ENCODE measurements at regions of chr15 and their contacts with region 1.

Region 1: DNA sequence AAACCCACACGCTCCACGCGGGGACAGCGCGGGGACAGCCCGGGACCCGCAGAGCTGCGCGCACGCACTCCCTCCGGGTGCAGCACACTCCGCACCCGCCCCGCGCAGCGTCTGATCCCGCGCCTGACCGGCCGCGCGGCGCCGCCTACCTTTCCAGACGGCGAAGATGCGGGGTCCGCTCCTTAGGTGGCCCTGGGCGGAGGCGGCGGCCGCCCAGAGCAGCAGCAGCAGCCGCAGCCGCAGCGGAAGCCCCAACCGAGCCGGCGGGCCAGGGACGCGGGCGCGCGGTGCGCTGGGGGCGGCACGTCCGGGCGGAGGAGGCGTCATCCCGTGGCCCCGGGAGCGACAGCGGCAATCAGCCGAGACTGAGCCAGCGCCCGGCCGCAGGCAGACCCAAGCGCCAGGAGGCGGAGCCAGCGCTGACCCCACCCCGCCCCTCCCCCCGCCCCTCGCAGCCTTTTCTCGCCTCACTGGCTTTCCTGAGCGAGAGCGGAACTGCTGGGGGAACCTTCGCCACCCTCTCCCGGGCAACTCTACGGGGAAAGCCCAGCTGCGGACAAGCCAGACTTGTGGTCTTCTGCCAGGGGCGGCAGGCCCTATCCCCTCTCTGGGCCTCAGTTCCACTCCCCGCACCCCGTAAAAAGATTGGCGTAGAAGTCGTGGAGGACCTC is at the start of gene SEMA7A:
- DNase-seq: peak; percentile 83
- ATAC-seq: peak; percentile 72
- H3K4me3 ChIP-seq: peak within 1 kb of the TSS; percentile 94
- H3K27ac ChIP-seq: peak within 1 kb of the TSS; percentile 53
- H3K4me1 ChIP-seq: peaks cover 44% of the 10 kb centered on the region
- H3K27me3 ChIP-seq: no peaks in the 10 kb centered on the region
- CTCF ChIP-seq: no peak
- total RNA-seq, gene SEMA7A: 74.9 and 75.9 TPM in 2 replicates

Region 2: DNA sequence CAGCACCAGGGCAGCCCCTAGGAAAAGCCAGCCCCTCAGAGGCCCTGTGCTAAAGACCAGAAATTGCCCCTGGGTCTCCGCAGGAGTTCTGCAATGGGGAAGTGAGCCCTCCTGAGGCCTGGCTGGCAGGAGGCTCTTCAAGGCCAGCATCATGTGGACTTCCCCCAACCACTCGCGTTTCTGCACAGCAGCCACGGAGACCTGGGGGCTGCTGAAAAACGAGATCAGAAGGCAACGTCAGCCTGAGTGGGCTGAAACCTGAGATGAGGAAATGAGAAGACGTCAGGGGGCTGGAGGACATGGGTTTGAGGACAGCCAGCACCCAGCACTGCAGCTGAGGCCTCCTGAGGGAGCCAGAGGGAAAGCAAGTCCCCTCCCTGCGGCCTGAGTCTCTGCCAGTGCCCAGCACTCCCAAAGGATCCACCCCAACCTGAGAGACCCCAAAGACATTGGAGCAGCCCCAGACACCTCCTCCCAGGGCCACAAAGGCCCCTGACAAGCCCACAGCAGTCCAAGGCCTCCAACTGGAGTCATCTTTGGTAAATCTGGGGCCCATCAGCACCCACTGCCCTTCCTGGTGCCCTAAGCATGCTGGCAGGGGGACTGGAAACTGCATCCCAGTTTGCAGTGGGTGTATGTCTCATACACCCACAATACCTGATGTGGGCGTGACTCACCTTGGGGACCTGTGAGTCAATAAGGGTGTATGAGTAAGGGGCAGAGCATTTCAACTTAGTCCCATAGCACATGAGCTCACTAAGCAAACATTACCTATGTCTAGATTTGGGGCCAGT is 37.1 kb before region 1 on chr15:
- CTCF ChIA-PET with region 1: no interaction called
- POLR2A ChIA-PET with region 1: no interaction called
- intact Hi-C with region 1: loop called (anchors 5 kb)
- DNase-seq: peak; percentile 98
- ATAC-seq: peak; percentile 78
- H3K4me3 ChIP-seq: no peak overlapping the region
- H3K27ac ChIP-seq: peak overlapping the region; percentile 100
- H3K4me1 ChIP-seq: peaks cover 67% of the 10 kb centered on the region
- H3K27me3 ChIP-seq: no peaks in the 10 kb centered on the region
- CTCF ChIP-seq: 0 out of 2 replicates have a peak, but pooled peaks have one; percentile 22

Region 3: GRCh38 chr15:74420197-74420898 is 13.4 kb before region 1 on chr15:
- CTCF ChIA-PET with region 1: no interaction called
- POLR2A ChIA-PET with region 1: no interaction called
- intact Hi-C with region 1: loop called (anchors 1 kb)
- DNase-seq: peak; percentile 67
- ATAC-seq: peak; percentile 41
- H3K4me3 ChIP-seq: no peak overlapping the region
- H3K27ac ChIP-seq: peak overlapping the region; percentile 29
- H3K4me1 ChIP-seq: peaks cover 91% of the 10 kb centered on the region
- H3K27me3 ChIP-seq: no peaks in the 10 kb centered on the region
- CTCF ChIP-seq: no peak

Region 4: DNA sequence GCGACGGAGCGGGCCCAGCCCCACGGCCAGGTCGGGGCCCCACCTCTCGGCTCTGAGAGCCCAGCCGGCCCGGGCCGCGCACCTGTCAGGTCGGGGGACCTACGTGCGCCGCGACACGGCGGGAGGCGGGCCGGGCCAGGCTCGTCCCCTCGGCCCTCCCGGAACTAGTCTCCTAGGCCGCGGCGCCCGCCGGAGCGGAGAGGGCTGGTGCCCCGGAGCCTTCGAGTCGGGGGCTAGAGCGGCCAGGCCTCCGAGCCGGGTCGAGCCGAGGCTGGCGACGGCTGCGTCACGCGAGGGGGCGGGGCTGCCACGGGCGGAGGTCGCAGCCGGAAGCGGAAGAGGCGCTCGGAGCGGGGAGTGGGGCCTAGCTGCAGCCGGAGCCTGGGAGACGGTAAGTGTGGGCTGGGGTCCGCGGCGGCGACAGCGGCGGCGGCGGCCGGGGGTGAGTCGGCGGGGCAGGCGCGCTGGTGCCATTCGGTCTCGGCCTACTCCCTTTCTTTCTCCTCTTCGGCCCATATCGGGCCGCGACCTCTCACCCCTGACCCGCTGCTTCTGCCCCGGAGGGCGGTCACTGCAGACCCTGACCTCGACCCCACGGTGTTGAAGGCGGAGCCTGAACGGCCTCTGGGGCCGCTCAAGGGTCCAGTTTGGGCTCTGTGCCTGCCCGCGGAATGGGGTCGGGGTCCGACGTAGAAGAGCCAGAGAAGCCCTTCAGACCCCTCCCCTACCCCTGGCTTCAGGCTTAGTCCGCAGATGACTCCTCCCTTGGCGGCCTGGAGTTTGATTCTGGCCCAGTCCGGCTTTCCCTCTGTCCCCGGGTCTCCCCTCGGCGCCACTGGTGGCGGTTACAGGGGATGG is 182.0 kb after region 1 on chr15 and contains the start of gene CLK3:
- CTCF ChIA-PET with region 1: no interaction called
- POLR2A ChIA-PET with region 1: interaction called, 16 read pairs
- intact Hi-C with region 1: no loop called
- DNase-seq: peak; percentile 95
- ATAC-seq: peak; percentile 89
- H3K4me3 ChIP-seq: peak within 1 kb of the TSS; percentile 100
- H3K27ac ChIP-seq: peak within 1 kb of the TSS; percentile 68
- H3K4me1 ChIP-seq: peaks cover 16% of the 10 kb centered on the region
- H3K27me3 ChIP-seq: no peaks in the 10 kb centered on the region
- CTCF ChIP-seq: no peak
- total RNA-seq, gene CLK3: 56.2 and 64.1 TPM in 2 replicates

Measured in PC-3 (cell line).